ENCODE measurements at regions of chr17 and their contacts with region 1.

Region 1: DNA sequence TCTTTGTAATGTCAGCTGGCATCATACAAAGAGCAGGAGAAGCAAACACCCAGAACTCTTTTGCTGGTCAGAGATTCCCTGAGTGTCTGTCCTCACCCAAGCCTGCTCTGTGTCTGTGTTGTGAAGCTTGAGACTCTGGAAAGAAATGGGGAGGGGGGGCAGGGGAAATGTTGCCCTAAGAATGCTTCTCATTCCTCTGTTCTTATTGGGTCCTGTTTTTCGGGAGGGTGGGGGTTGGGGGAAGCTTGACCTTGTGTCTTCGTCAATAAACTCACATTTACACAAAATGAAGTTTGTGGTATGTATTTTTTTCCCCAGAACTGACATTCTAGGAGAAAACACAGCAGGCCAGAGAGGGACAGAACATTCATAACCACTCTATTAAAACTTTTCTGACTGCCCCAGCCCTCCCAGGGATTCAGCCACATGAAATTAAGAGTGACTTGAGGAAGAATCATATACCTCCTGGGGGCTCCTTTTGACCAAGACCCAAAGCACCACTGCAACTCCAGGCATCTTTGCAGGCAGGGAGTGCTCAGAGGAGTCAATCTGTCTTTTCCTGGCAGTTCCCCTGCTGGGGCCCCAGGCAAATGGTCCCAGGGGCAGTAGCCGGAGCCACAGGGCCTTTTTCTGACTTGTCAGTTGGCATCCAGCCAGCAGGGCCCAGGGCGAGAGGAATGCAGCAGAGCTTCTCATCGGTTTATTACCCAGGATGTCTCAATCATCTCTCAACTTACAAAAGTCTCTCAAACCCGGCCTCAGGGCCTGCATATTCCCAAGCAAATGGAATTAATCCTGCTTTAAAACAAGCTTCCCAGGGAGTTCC is 5.1 kb upstream of the RASL10B start:
- DNase-seq: peak; percentile 63
- ATAC-seq: peak; percentile 14 to 69

Region 2: GRCh38 chr17:35612924-35613521 is 113.3 kb before region 1 on chr17:
- intact Hi-C with region 1: no loop called
- DNase-seq: peak; percentile 44
- ATAC-seq: peak in 1 of 2 donors; percentile 38

Region 3: GRCh38 chr17:35679007-35679682 is 47.2 kb before region 1 on chr17:
- intact Hi-C with region 1: loop called in 1 of 2 experiments (anchors 10 kb)
- DNase-seq: no peak
- ATAC-seq: no peak